ENCODE measurements at regions of chr1 and their contacts with region 1.

Region 1: DNA sequence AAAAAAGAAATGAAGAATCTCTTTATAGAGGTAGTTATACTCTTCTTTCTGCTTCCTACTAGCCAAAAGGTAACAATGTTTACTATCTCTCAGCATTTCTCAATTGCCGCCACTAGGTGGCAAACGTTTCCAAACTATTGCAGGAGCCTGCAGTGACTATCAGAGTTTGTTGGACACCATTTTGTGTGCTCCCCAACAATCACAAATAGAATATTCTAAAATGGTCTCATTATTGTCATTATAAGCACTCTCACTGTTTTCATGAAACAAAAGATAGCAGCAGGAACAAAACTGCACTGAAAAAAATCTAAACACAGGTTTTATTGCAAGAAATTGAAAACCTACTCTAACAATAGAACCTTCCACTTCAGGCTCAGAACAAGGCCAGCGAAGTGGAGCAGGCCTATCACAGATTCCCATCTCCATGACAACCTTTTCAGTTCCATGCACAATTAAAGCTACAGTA is 83.9 kb upstream of the PLPPR4 start:
- DNase-seq: peak; percentile 80 to 87 (median 83)
- ATAC-seq: peak; percentile 96
- H3K4me3 ChIP-seq: no peak overlapping the region
- H3K27ac ChIP-seq: peak overlapping the region in 1 of 4 donors; percentile 9
- H3K4me1 ChIP-seq: no peaks in the 10 kb centered on the region
- H3K27me3 ChIP-seq: no peaks in the 10 kb centered on the region
- CTCF ChIP-seq: peak; percentile 63 to 86 (median 80)
- POLR2A ChIP-seq: no peak

Region 2: GRCh38 chr1:99334991-99335390 is 154.6 kb after region 1 on chr1:
- intact Hi-C with region 1: no loop called
- DNase-seq: no peak
- ATAC-seq: no peak
- H3K4me3 ChIP-seq: no peak overlapping the region
- H3K27ac ChIP-seq: no peak overlapping the region
- H3K4me1 ChIP-seq: no peaks in the 10 kb centered on the region
- H3K27me3 ChIP-seq: no peaks in the 10 kb centered on the region
- CTCF ChIP-seq: no peak
- POLR2A ChIP-seq: no peak

Region 3: DNA sequence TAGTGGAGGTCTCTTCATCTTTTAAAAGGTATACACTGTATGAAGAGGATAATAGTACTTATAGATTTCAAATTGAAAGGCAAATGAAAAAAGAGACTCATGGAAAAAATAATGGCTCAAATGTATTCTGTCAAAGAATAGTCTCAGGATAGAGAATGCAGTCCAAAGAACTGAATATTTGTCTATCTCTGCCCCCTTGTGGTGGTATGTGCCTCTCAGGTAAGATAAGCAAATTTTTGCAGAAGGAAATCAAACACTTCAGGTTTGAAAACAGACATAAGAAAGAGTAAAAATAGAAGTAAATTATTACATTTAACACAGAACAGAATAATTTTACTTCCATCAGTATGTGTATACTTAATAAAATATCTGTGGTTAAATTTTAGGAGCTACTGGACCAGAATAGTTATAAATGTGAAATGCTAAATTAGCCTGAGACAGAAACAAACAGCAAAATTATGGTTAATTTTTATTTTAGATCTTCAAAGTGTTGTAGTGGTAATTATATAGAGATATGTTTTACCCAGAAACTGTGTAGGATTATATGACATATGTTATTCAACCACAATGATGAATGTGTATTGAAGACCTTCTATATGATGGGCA is 301.1 kb after region 1 on chr1:
- intact Hi-C with region 1: loop called (anchors 10 kb)
- DNase-seq: peak; percentile 51 to 76 (median 55)
- ATAC-seq: peak; percentile 80
- H3K4me3 ChIP-seq: no peak overlapping the region
- H3K27ac ChIP-seq: no peak overlapping the region
- H3K4me1 ChIP-seq: no peaks in the 10 kb centered on the region
- H3K27me3 ChIP-seq: no peaks in the 10 kb centered on the region
- CTCF ChIP-seq: peak; percentile 30 to 75 (median 67)
- POLR2A ChIP-seq: no peak

Measured in body of pancreas (tissue), 4 donors.